T-cell (primary cell): ENCODE measurements at regions of chr17 and their contacts with region 1.

Region 1: GRCh38 chr17:4287710-4288109 is 23.9 kb upstream of the ANKFY1 start:
- DNase-seq: no peak
- ATAC-seq: no peak
- H3K4me3 ChIP-seq: no peak overlapping the region
- H3K4me3 Mint-ChIP-seq: no peak overlapping the region
- H3K27ac ChIP-seq: no peak overlapping the region
- H3K27ac Mint-ChIP-seq: no peak overlapping the region
- H3K4me1 ChIP-seq: no peaks in the 10 kb centered on the region
- H3K4me1 Mint-ChIP-seq: peaks cover 0 to 9% (median 5%) of the 10 kb centered on the region in 3 donors
- H3K27me3 ChIP-seq: no peaks in the 10 kb centered on the region
- H3K27me3 Mint-ChIP-seq: no peaks in the 10 kb centered on the region

Region 2: DNA sequence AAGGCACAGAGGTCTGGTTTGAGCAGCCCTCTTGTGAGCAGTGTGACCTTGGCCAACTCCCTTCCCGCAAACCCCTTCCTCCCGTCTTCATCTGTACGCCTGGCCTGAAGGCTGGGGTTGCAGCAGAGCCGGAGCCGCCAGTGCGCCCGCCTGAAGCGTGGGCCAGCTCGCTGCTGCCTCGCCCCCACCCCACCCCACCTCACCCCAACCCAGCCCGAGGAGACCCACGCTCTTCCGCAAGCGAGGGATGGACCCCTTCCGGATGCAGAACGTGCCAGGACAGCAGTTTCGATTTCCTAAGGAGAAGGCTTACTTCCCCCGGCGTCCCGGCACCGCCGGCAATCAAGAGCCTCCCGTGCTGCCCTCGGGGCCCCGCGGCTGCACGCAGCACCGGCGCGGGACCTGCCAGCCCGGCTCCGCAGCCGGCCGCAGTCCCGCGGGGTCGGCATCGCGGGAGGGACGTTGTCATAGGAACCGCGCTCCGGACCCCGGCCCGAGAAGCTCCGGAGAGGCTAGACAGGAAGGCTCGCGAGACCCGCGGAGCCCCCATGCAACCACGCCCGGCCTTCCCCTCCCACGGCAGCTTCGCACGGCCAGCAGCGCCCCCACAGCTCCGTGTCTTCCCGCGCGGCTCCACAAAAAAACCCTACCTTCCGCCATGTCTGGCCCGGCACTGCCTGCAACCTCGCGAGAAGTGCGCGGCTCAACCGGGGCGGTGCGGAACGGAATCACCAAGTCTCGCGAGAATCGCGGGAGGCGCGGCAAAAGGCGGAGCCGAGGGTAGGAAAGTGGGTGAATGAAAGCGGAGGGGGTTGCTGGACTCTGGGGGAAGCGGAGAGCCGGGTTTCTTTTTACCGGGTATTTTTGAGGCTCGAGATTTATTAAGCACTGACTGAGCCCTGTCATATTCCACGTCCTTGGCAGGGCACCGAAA is 24.2 kb before region 1 on chr17 and contains the start of gene ANKFY1:
- CTCF ChIA-PET with region 1: no interaction called
- POLR2A ChIA-PET with region 1: interaction called in 1 of 2 experiments, 12 read pairs
- DNase-seq: peak; percentile 92 to 99 (median 97)
- ATAC-seq: peak; percentile 95 to 99 (median 98)
- H3K4me3 ChIP-seq: peak within 1 kb of the TSS; percentile 67 to 88
- H3K4me3 Mint-ChIP-seq: peak within 1 kb of the TSS; percentile 92 to 97 (median 96)
- H3K27ac ChIP-seq: peak within 1 kb of the TSS; percentile 70
- H3K27ac Mint-ChIP-seq: peak within 1 kb of the TSS; percentile 91 to 94
- H3K4me1 ChIP-seq: peaks cover 6 to 28% of the 10 kb centered on the region in 2 experiments
- H3K4me1 Mint-ChIP-seq: peaks cover 35 to 45% (median 42%) of the 10 kb centered on the region in 3 donors
- H3K27me3 ChIP-seq: no peaks in the 10 kb centered on the region
- H3K27me3 Mint-ChIP-seq: no peaks in the 10 kb centered on the region
- total RNA-seq, gene ANKFY1: 58.0 to 69.6 (median 67.0) TPM

Region 3: DNA sequence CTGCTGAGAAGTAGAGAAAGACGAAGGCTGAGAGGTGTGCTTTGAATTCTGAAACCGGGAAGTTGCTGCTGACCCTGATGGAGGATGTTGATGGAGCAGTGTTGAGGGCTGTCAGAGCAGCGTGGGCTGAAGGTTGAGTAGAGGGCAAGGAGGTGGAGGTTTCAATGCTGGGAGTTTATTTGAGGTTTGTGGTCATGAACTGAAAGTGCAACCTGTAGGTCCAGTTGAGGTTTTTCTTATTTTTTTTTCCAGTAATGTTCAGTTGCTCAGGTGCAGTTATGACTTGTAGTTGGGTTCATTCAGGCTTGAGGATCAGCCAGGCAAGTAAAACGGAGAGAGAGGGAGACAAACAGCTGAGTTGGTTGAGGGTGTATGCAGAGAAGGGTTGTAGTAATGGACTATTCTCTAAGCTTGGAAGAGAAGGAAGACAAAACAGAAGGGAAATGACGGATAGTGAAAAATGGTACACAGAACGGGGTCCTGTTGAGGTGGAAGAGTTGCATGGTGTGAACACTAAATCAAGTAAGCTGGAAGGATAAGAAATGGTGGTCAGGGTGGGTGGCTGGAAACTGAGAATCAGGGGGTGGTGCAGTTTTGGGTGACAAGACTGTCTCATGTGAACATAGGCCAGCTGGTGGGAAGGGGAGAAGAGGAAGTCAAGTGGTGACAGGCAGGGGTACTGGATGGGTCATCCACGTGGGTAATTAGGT is 87.5 kb after region 1 on chr17:
- CTCF ChIA-PET with region 1: no interaction called
- POLR2A ChIA-PET with region 1: no interaction called
- DNase-seq: peak in 7 of 35 experiments; percentile 4 to 54 (median 12)
- ATAC-seq: peak; percentile 68 to 79 (median 76)
- H3K4me3 ChIP-seq: no peak overlapping the region
- H3K4me3 Mint-ChIP-seq: peak overlapping the region; percentile 19 to 44 (median 25)
- H3K27ac ChIP-seq: peak overlapping the region; percentile 61
- H3K27ac Mint-ChIP-seq: peak overlapping the region; percentile 87 to 88
- H3K4me1 ChIP-seq: peaks cover 4 to 18% of the 10 kb centered on the region in 2 experiments
- H3K4me1 Mint-ChIP-seq: peaks cover 12 to 26% (median 13%) of the 10 kb centered on the region in 3 donors
- H3K27me3 ChIP-seq: no peaks in the 10 kb centered on the region
- H3K27me3 Mint-ChIP-seq: no peaks in the 10 kb centered on the region